ENCODE measurements at regions of chr19 and their contacts with region 1.

Region 1: DNA sequence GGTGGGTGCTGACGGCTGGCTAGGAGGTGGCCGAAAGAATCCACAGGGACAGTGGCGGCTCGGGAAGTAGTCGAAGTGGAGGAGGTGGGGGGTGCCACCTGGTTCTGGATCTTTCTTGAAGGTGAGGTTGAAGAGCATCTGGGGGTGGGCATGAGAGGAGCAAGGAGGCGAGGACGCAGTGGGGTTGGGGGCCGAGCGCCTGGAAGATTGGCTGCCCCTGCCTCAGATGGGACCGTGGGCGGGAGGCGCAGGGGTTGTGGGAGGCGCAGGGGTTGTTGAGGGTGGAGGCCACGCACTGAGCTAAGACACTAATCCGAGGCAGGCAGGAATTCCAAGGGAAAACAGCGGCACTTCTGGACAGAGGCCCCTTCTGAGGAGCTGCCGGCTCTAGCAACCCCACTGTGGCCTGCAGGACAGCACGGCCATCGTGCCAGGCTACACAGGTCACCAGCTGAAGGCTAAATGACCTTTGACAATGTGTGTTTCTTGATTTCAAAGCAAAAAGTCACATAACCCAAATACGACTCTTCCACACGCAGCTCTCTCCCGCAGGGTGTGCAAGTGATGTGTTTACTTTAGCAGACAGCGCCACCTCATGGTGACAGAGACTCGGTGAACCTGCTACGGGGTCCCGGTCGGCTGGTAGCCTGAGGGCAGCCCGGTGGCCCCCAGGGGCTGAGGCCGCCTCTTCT is 44.1 kb upstream of the RANBP3 start:
- DNase-seq: peak; percentile 62 to 85 (median 68)
- H3K4me3 ChIP-seq: peak overlapping the region in 3 of 59 donors; percentile 8 to 15 (median 15)
- H3K27ac ChIP-seq: no peak overlapping the region
- H3K27me3 ChIP-seq: no peaks in the 10 kb centered on the region
- CTCF ChIP-seq: peak; percentile 55 to 91 (median 82)

Region 2: DNA sequence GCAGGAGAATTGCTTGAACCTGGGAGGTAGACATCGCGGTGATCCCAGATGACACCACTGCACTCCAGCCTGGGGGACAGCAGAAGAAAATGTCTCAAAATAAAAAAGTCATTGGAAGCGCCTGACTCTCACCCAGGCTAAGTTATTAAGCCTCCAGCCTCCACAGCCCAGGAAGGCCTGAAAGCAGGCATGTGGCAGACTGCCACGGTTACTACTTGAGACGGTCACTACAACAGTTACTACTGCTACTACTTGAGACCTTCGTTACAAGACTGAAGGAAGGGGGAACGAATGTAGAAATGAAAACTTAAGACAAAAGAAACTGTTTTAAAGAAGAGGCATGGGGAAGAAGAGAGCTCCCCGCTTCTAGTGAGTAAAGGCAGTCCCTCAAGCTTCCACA is 247.1 kb before region 1 on chr19:
- intact Hi-C with region 1: loop called in 1 of 2 experiments (anchors 5 kb)
- DNase-seq: no peak
- H3K4me3 ChIP-seq: no peak overlapping the region
- H3K27ac ChIP-seq: no peak overlapping the region
- H3K27me3 ChIP-seq: no peaks in the 10 kb centered on the region
- CTCF ChIP-seq: no peak

Region 3: DNA sequence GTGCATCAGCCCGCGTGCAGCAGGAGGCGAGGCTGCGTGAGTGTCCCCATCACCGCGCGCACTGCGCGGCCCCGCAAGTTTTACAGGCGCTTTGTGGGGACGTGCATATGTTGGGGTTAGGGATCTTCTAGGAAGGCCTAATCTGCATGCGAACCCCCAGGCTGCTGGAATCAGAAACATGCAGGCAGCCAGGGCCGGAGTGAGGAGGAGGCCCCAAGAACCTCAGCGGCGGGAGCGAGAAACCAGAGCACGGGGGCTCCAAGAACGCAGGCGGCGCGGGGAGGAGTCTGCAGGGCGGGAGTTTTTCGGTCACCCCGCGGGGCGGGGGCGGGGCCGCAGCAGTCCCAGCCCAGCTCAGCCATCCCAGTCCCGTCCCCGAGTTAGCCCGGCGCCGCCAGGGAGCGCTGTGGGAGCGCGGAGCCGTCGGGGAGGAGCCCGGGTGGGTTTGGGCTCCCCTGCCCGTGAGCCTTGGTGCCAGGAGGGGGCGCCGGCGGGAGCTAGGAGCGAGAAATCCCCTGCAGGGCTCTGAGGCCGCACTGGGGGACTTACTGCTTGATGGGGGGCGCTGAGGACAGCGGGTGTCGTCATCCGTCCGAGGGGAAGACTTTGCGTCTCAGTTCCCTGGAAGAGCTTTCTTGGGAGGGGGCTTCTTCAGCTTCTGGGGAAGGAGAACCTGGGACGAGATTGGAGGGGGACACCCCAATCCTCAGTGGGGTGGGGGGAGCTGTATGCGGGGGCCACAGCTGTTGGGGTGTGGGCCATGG is 218.1 kb before region 1 on chr19:
- intact Hi-C with region 1: loop called in 1 of 2 experiments (anchors 10 kb)
- DNase-seq: peak in 2 of 10 donors; percentile 36 to 69
- H3K4me3 ChIP-seq: peak overlapping the region in 37 of 59 donors; percentile 2 to 56 (median 25)
- H3K27ac ChIP-seq: no peak overlapping the region
- H3K27me3 ChIP-seq: peaks cover 0 to 72% (median 53%) of the 10 kb centered on the region in 45 donors
- CTCF ChIP-seq: peak; percentile 18 to 77 (median 58)

Region 4: GRCh38 chr19:5987077-5987818 is 34.8 kb before region 1 on chr19:
- intact Hi-C with region 1: loop called (anchors 1 to 2 kb)
- DNase-seq: peak; percentile 51 to 85 (median 75)
- H3K4me3 ChIP-seq: peak overlapping the region in 58 of 59 donors; percentile 8 to 65 (median 42)
- H3K27ac ChIP-seq: peak overlapping the region in 5 of 59 donors; percentile 13 to 65 (median 44)
- H3K27me3 ChIP-seq: no peaks in the 10 kb centered on the region
- CTCF ChIP-seq: peak; percentile 87 to 98 (median 94)